Right cardiac atrium (tissue), 5 donors: ENCODE measurements at regions of chr15 and their contacts with region 1.

Region 1: GRCh38 chr15:51227940-51228783 is 110.2 kb downstream of the CYP19A1 start:
- DNase-seq: peak in 2 of 3 donors; percentile 19 to 47
- ATAC-seq: peak; percentile 47 to 80
- H3K4me3 ChIP-seq: no peak overlapping the region
- H3K27ac ChIP-seq: no peak overlapping the region
- H3K4me1 ChIP-seq: no peaks in the 10 kb centered on the region
- H3K27me3 ChIP-seq: no peaks in the 10 kb centered on the region

Region 2: GRCh38 chr15:51401872-51402517 is 173.8 kb after region 1 on chr15:
- intact Hi-C with region 1: loop called in 1 of 4 experiments (anchors 2 kb)
- DNase-seq: peak; percentile 38 to 83 (median 65)
- ATAC-seq: peak; percentile 59 to 65
- H3K4me3 ChIP-seq: no peak overlapping the region
- H3K27ac ChIP-seq: no peak overlapping the region
- H3K4me1 ChIP-seq: no peaks in the 10 kb centered on the region
- H3K27me3 ChIP-seq: no peaks in the 10 kb centered on the region